ENCODE measurements at regions of chr2 and their contacts with region 1.

Region 1: DNA sequence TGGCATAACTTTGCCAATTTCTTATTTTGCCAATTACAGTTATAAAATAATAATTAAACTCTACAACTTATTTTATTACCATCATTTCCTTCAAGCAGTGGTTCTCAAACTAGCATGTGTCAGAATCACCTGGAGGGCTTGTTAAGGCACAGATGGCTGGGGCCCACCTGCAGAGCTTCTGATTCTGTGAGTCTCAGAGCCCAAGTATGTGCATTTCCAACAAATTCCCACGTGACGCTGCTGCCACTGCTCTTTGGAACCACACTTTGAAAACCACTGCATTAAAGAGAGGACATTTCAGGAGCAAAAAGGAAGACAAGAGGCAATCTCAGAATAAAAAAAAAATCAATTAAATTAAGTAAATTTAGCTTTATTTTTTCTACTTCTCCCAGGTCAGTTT is 94.0 kb upstream of the HNRNPA3 start:
- DNase-seq: no peak
- H3K27ac ChIP-seq: no peak overlapping the region
- CTCF ChIP-seq: no peak

Region 2: GRCh38 chr2:177235855-177236437 is 117.3 kb after region 1 on chr2:
- CTCF ChIA-PET with region 1: no interaction called
- POLR2A ChIA-PET with region 1: no interaction called
- DNase-seq: no peak
- H3K27ac ChIP-seq: no peak overlapping the region
- CTCF ChIP-seq: no peak

Region 3: GRCh38 chr2:178796079-178796677 is 1677.5 kb after region 1 on chr2:
- CTCF ChIA-PET with region 1: interaction called, 10 read pairs
- POLR2A ChIA-PET with region 1: no interaction called
- DNase-seq: peak; percentile 17
- H3K27ac ChIP-seq: no peak overlapping the region
- CTCF ChIP-seq: peak; percentile 66